ENCODE measurements at regions of chr15 and their contacts with region 1.

Region 1: DNA sequence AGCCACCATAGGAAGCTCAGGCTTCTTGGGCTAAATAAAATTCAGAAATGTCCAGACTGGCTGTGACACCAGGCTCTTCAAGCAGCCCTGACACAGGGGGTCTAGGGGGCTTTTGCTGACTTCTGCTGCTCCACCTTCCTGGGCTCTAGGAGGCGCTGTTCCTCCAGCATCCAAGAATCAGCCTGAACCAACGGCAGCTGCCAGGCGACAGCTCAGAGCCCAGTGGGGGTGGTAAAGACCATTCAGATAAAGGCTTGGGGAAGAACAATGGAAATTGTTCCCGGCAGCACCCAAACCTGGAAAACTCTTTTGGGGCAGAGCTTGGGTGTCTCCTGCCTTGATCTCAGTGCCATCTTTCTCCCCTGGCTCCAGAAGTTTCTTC is 21.6 kb upstream of the PSTPIP1 start:
- DNase-seq: no peak
- ATAC-seq: peak; percentile 86
- H3K4me3 ChIP-seq: no peak overlapping the region
- H3K27ac ChIP-seq: no peak overlapping the region
- H3K4me1 ChIP-seq: no peaks in the 10 kb centered on the region
- H3K27me3 ChIP-seq: no peaks in the 10 kb centered on the region
- CTCF ChIP-seq: peak; percentile 72 to 79 (median 73)
- EP300 ChIP-seq: no peak
- POLR2A ChIP-seq: no peak
- RAD21 ChIP-seq: peak; percentile 89

Region 2: GRCh38 chr15:76576523-76577279 is 396.7 kb before region 1 on chr15:
- CTCF ChIA-PET with region 1: no interaction called
- POLR2A ChIA-PET with region 1: no interaction called
- RAD21 ChIA-PET with region 1: no interaction called
- SMC1A ChIA-PET with region 1: no interaction called
- in situ Hi-C with region 1: no loop called
- intact Hi-C with region 1: no loop called
- DNase-seq: peak; percentile 21
- ATAC-seq: no peak
- H3K4me3 ChIP-seq: no peak overlapping the region
- H3K27ac ChIP-seq: no peak overlapping the region
- H3K4me1 ChIP-seq: peaks cover 20% of the 10 kb centered on the region
- H3K27me3 ChIP-seq: no peaks in the 10 kb centered on the region
- CTCF ChIP-seq: no peak
- EP300 ChIP-seq: no peak
- POLR2A ChIP-seq: no peak
- RAD21 ChIP-seq: no peak

Region 3: GRCh38 chr15:76987926-76988860 is 14.8 kb after region 1 on chr15:
- CTCF ChIA-PET with region 1: interaction called, 82 read pairs
- POLR2A ChIA-PET with region 1: interaction called, 10 read pairs
- RAD21 ChIA-PET with region 1: interaction called, 73 read pairs
- SMC1A ChIA-PET with region 1: interaction called, 99 read pairs
- in situ Hi-C with region 1: no loop called
- intact Hi-C with region 1: no loop called
- DNase-seq: peak; percentile 90
- ATAC-seq: peak; percentile 91
- H3K4me3 ChIP-seq: peak overlapping the region; percentile 40; the same call in 1 of the 2 replicates
- H3K27ac ChIP-seq: peak overlapping the region; percentile 89
- H3K4me1 ChIP-seq: peaks cover 41% of the 10 kb centered on the region
- H3K27me3 ChIP-seq: no peaks in the 10 kb centered on the region
- CTCF ChIP-seq: no peak
- EP300 ChIP-seq: peak; percentile 79 to 94; a peak in 3 of 4 replicates
- POLR2A ChIP-seq: peak; percentile 53
- RAD21 ChIP-seq: peak; percentile 25; the same call in 1 of the 2 replicates

Region 4: DNA sequence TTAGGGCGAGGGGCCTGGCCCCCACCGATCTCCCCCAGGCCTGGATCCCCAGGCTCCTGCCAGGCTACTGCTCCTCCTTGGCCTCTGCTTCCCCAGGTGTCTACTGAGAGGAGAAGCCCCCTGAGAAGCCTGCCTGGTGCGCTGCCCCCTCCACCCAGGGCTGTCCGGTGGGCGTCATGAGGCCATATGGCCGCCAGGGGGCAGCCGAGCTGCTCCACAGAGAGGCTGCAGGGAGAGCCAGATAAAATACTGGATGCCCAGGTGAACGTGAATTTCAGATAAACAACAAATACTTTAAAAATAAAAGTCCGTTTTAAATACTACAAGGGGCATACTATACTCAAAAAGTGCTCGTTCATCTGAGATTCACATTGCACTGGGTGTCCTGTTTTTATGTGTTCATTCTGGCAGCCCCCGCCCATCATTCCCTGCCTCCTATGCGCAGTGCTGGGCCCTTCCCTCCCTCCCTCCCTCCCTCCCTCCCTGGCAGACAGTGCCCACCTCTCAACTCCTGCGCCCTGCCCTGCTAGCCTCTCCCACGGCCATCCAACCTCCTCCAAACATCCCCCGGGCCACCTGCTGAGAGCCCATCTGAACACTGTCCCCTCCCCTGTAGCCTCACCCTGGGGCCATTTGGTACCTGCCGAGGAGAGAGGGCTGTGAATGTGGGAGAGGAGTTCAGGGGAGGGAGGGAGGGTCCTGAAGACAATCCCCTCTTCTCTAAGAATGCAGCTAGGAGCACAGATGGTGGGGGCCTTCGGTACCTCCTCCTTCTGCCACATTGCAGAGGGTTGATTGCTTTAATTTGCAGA is 51.1 kb after region 1 on chr15:
- CTCF ChIA-PET with region 1: interaction called, 483 read pairs
- POLR2A ChIA-PET with region 1: interaction called, 10 read pairs
- RAD21 ChIA-PET with region 1: interaction called, 259 read pairs
- SMC1A ChIA-PET with region 1: interaction called, 375 read pairs
- in situ Hi-C with region 1: no loop called
- intact Hi-C with region 1: loop called (anchors 2 kb)
- DNase-seq: no peak
- ATAC-seq: peak; percentile 66
- H3K4me3 ChIP-seq: no peak overlapping the region
- H3K27ac ChIP-seq: no peak overlapping the region
- H3K4me1 ChIP-seq: peaks cover 33% of the 10 kb centered on the region
- H3K27me3 ChIP-seq: no peaks in the 10 kb centered on the region
- CTCF ChIP-seq: peak; percentile 75 to 93 (median 83)
- EP300 ChIP-seq: no peak
- POLR2A ChIP-seq: no peak
- RAD21 ChIP-seq: peak; percentile 83

Region 5: DNA sequence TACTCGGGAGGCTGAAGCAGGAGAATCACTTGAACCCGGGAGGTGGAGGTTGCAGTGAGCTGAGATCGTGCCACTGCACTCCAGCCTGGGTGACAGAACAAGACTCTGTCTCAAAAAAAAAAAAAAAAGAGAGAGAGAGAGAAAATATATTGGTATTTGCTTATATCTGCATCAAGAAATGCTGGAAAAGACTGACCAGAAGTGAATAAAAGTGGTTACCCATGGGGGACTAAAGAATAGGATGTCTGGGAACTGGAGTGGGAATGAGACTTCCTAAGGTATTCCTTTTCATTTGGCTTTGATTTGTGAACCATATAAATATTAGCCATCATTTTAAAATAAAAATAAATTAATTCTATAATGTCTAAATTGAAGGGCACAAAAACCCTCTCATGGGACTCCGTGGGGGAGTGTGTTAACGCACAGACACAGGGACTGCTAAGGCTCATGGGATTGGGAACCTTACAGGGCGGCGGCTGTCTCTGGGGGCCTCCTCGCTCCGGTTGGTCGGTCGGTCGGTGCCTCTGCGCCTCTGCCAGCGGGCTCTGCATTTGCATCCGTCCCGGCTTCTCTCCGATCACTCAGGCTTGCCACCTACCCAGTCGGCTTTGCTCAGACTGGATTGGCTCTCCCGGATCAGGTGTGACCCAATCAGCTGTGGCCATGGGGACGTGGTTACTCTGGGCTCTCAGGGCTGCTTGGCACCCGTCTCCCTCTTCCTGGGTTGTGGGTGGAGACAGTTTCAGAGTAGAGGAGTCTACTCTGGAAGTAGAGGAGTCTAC is 110.2 kb after region 1 on chr15:
- CTCF ChIA-PET with region 1: interaction called, 3 read pairs
- POLR2A ChIA-PET with region 1: no interaction called
- RAD21 ChIA-PET with region 1: no interaction called
- SMC1A ChIA-PET with region 1: interaction called, 3 read pairs
- in situ Hi-C with region 1: no loop called
- intact Hi-C with region 1: loop called (anchors 5 kb)
- DNase-seq: peak; percentile 54
- ATAC-seq: peak; percentile 94
- H3K4me3 ChIP-seq: no peak overlapping the region; the same call in 1 of the 2 replicates
- H3K27ac ChIP-seq: no peak overlapping the region
- H3K4me1 ChIP-seq: peaks cover 35% of the 10 kb centered on the region
- H3K27me3 ChIP-seq: no peaks in the 10 kb centered on the region
- CTCF ChIP-seq: no peak
- EP300 ChIP-seq: no peak
- POLR2A ChIP-seq: no peak
- RAD21 ChIP-seq: no peak

Region 6: GRCh38 chr15:77118882-77119321 is 145.5 kb after region 1 on chr15:
- CTCF ChIA-PET with region 1: interaction called, 30 read pairs
- POLR2A ChIA-PET with region 1: no interaction called
- RAD21 ChIA-PET with region 1: interaction called, 8 read pairs
- SMC1A ChIA-PET with region 1: interaction called, 20 read pairs
- in situ Hi-C with region 1: no loop called
- intact Hi-C with region 1: no loop called
- DNase-seq: peak; percentile 32
- ATAC-seq: peak; percentile 81
- H3K4me3 ChIP-seq: no peak overlapping the region
- H3K27ac ChIP-seq: no peak overlapping the region
- H3K4me1 ChIP-seq: peaks cover 12% of the 10 kb centered on the region; the same call in 1 of the 2 replicates
- H3K27me3 ChIP-seq: no peaks in the 10 kb centered on the region
- CTCF ChIP-seq: peak; percentile 65 to 76 (median 71)
- EP300 ChIP-seq: no peak
- POLR2A ChIP-seq: no peak
- RAD21 ChIP-seq: peak; percentile 86

Region 7: GRCh38 chr15:77538027-77538451 is 564.7 kb after region 1 on chr15:
- CTCF ChIA-PET with region 1: interaction called, 43 read pairs
- POLR2A ChIA-PET with region 1: interaction called, 3 read pairs
- RAD21 ChIA-PET with region 1: interaction called, 38 read pairs
- SMC1A ChIA-PET with region 1: interaction called, 20 read pairs
- in situ Hi-C with region 1: no loop called
- intact Hi-C with region 1: no loop called
- DNase-seq: peak; percentile 72
- ATAC-seq: peak; percentile 82
- H3K4me3 ChIP-seq: peak overlapping the region; percentile 28; the same call in 1 of the 2 replicates
- H3K27ac ChIP-seq: peak overlapping the region; percentile 91
- H3K4me1 ChIP-seq: peaks cover 40% of the 10 kb centered on the region
- H3K27me3 ChIP-seq: no peaks in the 10 kb centered on the region
- CTCF ChIP-seq: no peak
- EP300 ChIP-seq: peak; percentile 53 to 56; a peak in 2 of 4 replicates
- POLR2A ChIP-seq: no peak
- RAD21 ChIP-seq: no peak